ENCODE measurements at regions of chr6 and their contacts with region 1.

Region 1: GRCh38 chr6:41683510-41684310 is 45.4 kb downstream of the MDFI start:
- DNase-seq: peak; percentile 90

Region 2: GRCh38 chr6:41455818-41456217 is 227.9 kb before region 1 on chr6:
- intact Hi-C with region 1: loop called (anchors 5 kb)
- DNase-seq: no peak

Region 3: GRCh38 chr6:41602864-41603608 is 80.7 kb before region 1 on chr6:
- intact Hi-C with region 1: loop called (anchors 1 kb)
- DNase-seq: peak; percentile 90

Region 4: GRCh38 chr6:41872147-41872546 is 188.4 kb after region 1 on chr6:
- intact Hi-C with region 1: no loop called
- DNase-seq: no peak

Measured in cardiac septum (tissue), 1 donor.